Activated naive CD4-positive, alpha-beta T cell treated with anti-CD3 and anti-CD28 coated beads for 36 hours (primary cell): ENCODE measurements at regions of chr17 and their contacts with region 1.

Region 1: GRCh38 chr17:19507775-19508576 is 25.7 kb upstream of the SLC47A1 start:
- DNase-seq: peak; percentile 90
- H3K4me3 Mint-ChIP-seq: peak overlapping the region; percentile 80
- H3K27ac Mint-ChIP-seq: peak overlapping the region; percentile 93
- H3K4me1 Mint-ChIP-seq: peaks cover 7% of the 10 kb centered on the region
- H3K27me3 Mint-ChIP-seq: peaks cover 3% of the 10 kb centered on the region

Region 2: DNA sequence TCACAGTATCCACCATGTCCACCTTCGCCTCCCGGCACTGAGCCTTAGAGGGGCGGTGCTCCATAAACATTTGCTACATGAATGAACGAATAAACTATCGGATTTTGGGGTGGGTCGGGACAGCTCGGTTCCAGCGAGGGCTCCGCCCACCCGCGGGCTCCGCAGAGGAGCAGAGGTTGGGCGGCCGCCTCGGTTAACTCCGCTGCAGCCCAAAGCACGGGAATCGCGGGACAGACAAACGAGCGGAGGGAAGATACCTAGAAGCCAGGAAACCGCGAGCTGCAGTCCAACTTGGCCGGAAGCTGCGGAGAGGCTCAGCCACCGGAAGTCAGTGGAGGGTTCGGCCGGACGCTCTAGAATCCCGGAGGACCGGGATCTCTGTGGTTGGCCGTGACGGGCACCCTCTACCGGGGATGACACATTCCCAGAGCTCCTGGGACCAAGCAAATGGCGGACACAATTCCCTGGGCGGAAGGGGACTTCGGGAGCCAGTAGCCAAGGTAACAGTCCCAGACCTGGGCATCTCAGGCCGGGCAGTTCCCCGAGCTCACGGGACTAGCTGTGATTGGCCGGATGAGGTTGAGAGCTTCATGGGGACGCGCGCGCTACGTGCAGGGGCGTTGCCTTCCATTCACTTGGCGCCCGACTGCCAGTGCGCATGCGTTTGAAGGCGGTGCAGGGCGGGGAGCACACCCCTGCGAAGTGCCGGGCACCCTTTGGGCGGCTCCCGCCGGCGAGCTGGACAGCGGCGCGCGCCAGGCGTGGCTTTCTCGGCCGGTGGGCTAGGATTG is 130.2 kb before region 1 on chr17:
- CTCF ChIA-PET with region 1: no interaction called
- intact Hi-C with region 1: loop called (anchors 5 kb)
- DNase-seq: peak; percentile 95
- H3K4me3 Mint-ChIP-seq: peak overlapping the region; percentile 99
- H3K27ac Mint-ChIP-seq: peak overlapping the region; percentile 97
- H3K4me1 Mint-ChIP-seq: peaks cover 8% of the 10 kb centered on the region
- H3K27me3 Mint-ChIP-seq: no peaks in the 10 kb centered on the region

Region 3: DNA sequence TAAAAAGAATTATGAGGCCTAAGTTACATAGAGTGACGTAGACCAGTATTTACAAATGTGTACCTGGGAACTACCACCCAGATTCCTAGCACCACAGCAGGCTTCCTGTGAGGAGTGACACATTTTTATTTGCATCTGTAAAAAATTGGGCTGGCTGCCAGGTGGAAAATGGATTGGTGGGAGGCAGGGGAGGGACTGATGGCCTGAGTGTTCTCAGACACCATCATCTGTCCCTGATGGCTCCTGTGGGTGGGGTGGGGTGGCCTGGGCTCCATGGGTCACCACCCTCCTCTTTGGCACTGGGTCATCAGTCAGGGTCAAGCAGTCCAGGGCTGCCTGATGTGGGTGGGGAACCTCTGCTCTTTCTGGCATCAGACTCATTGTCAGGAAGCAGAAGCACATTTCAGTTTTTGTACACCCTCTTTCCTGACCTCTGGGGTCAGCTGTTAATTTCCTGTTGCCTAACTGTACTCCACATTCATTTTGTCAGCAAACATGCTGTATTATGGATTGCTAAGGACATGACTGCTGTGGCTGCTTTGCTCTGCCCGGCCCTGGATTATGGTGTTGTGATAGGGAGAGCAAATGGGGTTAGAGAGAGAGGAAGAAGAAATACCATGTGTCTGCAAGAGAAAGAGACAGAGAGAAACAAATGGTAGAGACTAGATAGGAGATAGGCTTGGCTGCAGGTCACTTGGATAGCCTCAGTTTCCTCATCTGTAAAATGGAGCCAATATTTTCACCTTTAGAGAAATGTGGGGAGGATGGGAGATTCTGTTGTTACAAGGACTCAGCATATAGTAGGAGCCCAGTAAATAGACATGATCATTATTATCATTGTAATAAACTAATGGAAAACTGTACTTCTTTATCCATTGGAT is 109.4 kb before region 1 on chr17:
- CTCF ChIA-PET with region 1: no interaction called
- intact Hi-C with region 1: no loop called
- DNase-seq: no peak
- H3K4me3 Mint-ChIP-seq: no peak overlapping the region
- H3K27ac Mint-ChIP-seq: no peak overlapping the region
- H3K4me1 Mint-ChIP-seq: no peaks in the 10 kb centered on the region
- H3K27me3 Mint-ChIP-seq: no peaks in the 10 kb centered on the region